CD4-positive, alpha-beta memory T cell (primary cell): ENCODE measurements at regions of chr17 and their contacts with region 1.

Region 1: GRCh38 chr17:9575381-9576101 is at the start of gene STX8:
- DNase-seq: peak; percentile 70 to 76 (median 71)
- H3K4me3 ChIP-seq: peak within 1 kb of the TSS; percentile 71 to 94
- H3K4me3 Mint-ChIP-seq: peak within 1 kb of the TSS; percentile 94 to 99 (median 98)
- H3K27ac ChIP-seq: peak within 1 kb of the TSS; percentile 52
- H3K27ac Mint-ChIP-seq: peak within 1 kb of the TSS; percentile 87 to 97 (median 93)
- H3K4me1 ChIP-seq: peaks cover 19% of the 10 kb centered on the region
- H3K4me1 Mint-ChIP-seq: peaks cover 18 to 37% (median 29%) of the 10 kb centered on the region in 4 donors
- H3K27me3 ChIP-seq: no peaks in the 10 kb centered on the region
- H3K27me3 Mint-ChIP-seq: no peaks in the 10 kb centered on the region
- total RNA-seq, gene STX8: 54.2 to 59.5 TPM

Region 2: DNA sequence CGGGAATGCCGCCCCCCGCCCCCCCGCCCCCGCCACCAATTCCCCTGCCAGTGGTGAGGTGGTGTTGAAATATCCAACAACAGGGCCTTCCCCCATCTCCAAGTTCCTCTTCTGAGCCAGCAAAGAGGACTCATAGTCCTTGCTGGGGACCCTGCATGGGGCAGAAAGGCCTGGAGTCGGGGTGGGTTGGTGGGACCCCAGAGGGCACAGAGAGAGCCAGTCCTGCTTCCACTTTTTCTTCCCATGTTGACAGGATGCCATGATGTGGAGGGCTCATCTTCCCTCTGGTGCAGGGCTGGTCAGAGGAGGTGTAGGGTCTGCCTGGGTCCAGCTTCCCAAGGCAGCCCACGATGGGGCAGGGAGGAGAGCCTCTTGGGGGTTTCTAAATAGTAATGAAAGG is 659.1 kb before region 1 on chr17:
- CTCF ChIA-PET with region 1: no interaction called
- POLR2A ChIA-PET with region 1: no interaction called
- intact Hi-C with region 1: no loop called
- DNase-seq: no peak
- H3K4me3 ChIP-seq: no peak overlapping the region
- H3K4me3 Mint-ChIP-seq: no peak overlapping the region
- H3K27ac ChIP-seq: no peak overlapping the region
- H3K27ac Mint-ChIP-seq: peak overlapping the region in 4 of 7 donors; percentile 43 to 82 (median 62)
- H3K4me1 ChIP-seq: peaks cover 19% of the 10 kb centered on the region
- H3K4me1 Mint-ChIP-seq: peaks cover 17 to 46% (median 35%) of the 10 kb centered on the region in 4 donors
- H3K27me3 ChIP-seq: no peaks in the 10 kb centered on the region
- H3K27me3 Mint-ChIP-seq: no peaks in the 10 kb centered on the region

Region 3: GRCh38 chr17:9594065-9594464 is 18.5 kb after region 1 on chr17:
- CTCF ChIA-PET with region 1: interaction called, 12 read pairs
- POLR2A ChIA-PET with region 1: no interaction called
- intact Hi-C with region 1: no loop called
- DNase-seq: no peak
- H3K4me3 ChIP-seq: no peak overlapping the region
- H3K4me3 Mint-ChIP-seq: no peak overlapping the region
- H3K27ac ChIP-seq: no peak overlapping the region
- H3K27ac Mint-ChIP-seq: no peak overlapping the region
- H3K4me1 ChIP-seq: no peaks in the 10 kb centered on the region
- H3K4me1 Mint-ChIP-seq: no peaks in the 10 kb centered on the region
- H3K27me3 ChIP-seq: no peaks in the 10 kb centered on the region
- H3K27me3 Mint-ChIP-seq: peaks cover 5 to 7% of the 10 kb centered on the region in 2 donors

Region 4: DNA sequence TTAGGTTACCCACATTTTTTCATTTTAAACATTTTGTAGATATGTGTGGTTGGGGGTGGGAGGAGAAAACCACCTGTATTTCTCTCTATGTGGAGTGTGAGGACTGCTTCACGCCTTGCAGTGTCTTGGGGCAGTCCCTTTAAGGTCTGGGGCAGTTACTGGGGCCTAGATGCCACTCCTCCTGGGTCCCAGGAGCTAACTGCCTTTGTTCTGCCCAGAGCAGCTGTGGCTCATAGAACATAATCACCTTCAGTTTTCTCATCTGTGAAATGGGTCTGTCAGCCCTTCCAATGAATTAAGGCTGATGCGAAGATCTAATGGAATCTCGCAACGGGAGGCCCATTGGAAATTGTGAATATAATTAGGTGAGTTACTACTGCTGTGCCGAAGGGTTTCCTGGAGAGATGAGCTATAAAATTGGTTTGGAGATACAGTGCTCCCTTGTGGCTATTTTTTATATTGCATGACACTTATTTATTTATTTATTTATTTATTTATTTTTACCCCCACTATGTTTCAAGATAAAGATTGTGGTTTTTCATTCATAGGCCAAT is 192.9 kb after region 1 on chr17:
- CTCF ChIA-PET with region 1: no interaction called
- POLR2A ChIA-PET with region 1: no interaction called
- intact Hi-C with region 1: loop called (anchors 10 kb)
- DNase-seq: peak in 3 of 5 donors; percentile 12 to 19 (median 14)
- H3K4me3 ChIP-seq: no peak overlapping the region
- H3K4me3 Mint-ChIP-seq: no peak overlapping the region
- H3K27ac ChIP-seq: no peak overlapping the region
- H3K27ac Mint-ChIP-seq: peak overlapping the region in 1 of 7 donors; percentile 26
- H3K4me1 ChIP-seq: no peaks in the 10 kb centered on the region
- H3K4me1 Mint-ChIP-seq: peaks cover 0 to 2% (median 0%) of the 10 kb centered on the region in 4 donors
- H3K27me3 ChIP-seq: no peaks in the 10 kb centered on the region
- H3K27me3 Mint-ChIP-seq: peaks cover 11 to 14% of the 10 kb centered on the region in 2 donors